ENCODE measurements at regions of chr12 and their contacts with region 1.

Region 1: GRCh38 chr12:18502422-18502968 is 235.3 kb downstream of the PLCZ1 start:
- DNase-seq: no peak
- H3K4me3 ChIP-seq: no peak overlapping the region
- CTCF ChIP-seq: no peak
- POLR2A ChIP-seq: no peak

Region 2: GRCh38 chr12:19517583-19517982 is 1015.1 kb after region 1 on chr12:
- intact Hi-C with region 1: loop called (anchors 10 kb)
- DNase-seq: no peak
- H3K4me3 ChIP-seq: no peak overlapping the region
- CTCF ChIP-seq: no peak
- POLR2A ChIP-seq: no peak